ENCODE measurements at regions of chr1 and their contacts with region 1.

Region 1: GRCh38 chr1:89804642-89805237 is 16.1 kb upstream of the LRRC8D start:
- DNase-seq: peak; percentile 74 to 91 (median 80)
- ATAC-seq: peak; percentile 89 to 100 (median 98)
- H3K4me3 ChIP-seq: no peak overlapping the region
- H3K27ac ChIP-seq: no peak overlapping the region
- H3K4me1 ChIP-seq: no peaks in the 10 kb centered on the region
- H3K27me3 ChIP-seq: no peaks in the 10 kb centered on the region
- CTCF ChIP-seq: peak; percentile 73 to 84 (median 78)

Region 2: GRCh38 chr1:89987170-89987819 is 182.6 kb after region 1 on chr1:
- intact Hi-C with region 1: loop called (anchors 5 to 10 kb)
- DNase-seq: peak in 3 of 6 donors; percentile 24 to 66 (median 41)
- ATAC-seq: peak; percentile 86 to 98 (median 94)
- H3K4me3 ChIP-seq: no peak overlapping the region
- H3K27ac ChIP-seq: no peak overlapping the region
- H3K4me1 ChIP-seq: peaks cover 0 to 11% (median 0%) of the 10 kb centered on the region in 3 donors
- H3K27me3 ChIP-seq: no peaks in the 10 kb centered on the region
- CTCF ChIP-seq: peak; percentile 64 to 79 (median 71)